ENCODE measurements at regions of chr4 and their contacts with region 1.

Region 1: DNA sequence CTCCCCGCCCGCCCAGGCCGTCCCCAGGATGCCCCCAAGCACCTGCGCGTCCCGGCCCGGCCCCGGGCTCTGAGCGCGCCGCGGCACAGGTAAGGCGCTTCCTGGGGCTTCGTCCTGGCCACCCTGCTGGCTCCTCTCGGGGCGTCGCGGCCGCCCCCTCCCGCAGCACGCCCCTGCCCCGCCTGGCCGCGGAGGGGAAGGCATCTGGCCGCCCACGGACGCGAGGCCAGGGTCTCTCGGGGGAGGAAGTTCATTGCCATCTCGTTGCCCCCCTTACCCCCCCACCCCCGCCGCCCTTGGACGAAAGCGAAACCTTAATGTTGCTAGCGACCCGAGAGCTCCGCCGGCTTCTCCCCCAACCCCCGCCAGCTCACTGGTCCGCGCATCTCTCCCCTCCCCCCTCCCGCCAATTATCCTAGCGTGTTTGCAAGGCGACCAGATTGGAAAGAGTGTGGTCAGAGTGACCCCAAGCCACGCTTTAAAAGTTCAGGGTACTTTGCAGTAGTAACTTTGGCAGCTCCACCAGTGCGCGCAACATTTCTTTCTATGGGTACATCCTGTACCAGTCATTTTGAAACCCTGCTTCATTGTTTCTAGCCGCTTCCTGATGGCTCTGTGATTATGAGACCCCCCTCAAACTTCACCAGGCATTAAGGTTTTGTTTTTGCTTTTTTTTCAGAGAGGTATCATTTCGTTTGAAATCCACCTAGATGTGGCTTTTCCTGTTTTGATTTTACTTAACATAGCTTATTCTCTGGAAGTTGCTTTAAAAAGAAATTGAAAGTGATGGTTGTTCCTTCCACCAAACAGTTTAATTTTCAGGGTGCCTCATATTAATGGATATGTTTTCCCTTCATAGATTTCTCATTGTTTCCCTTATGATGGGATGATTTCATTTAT is 626 bp downstream of the TBC1D1 start:
- DNase-seq: peak in 2 of 10 donors; percentile 9
- H3K4me3 ChIP-seq: peak overlapping the region; percentile 53 to 93 (median 79)
- H3K27ac ChIP-seq: peak overlapping the region in 55 of 59 donors; percentile 49 to 94 (median 86)
- H3K27me3 ChIP-seq: peaks cover 0 to 2% (median 0%) of the 10 kb centered on the region in 45 donors
- CTCF ChIP-seq: peak in 1 of 56 donors; percentile 16

Region 2: GRCh38 chr4:37826295-37827029 is 65.0 kb before region 1 on chr4 and contains the start of gene PGM2:
- intact Hi-C with region 1: loop called in 1 of 2 experiments (anchors 5 kb)
- DNase-seq: peak; percentile 48 to 90 (median 80)
- H3K4me3 ChIP-seq: peak within 1 kb of the TSS; percentile 50 to 98 (median 83)
- H3K27ac ChIP-seq: peak within 1 kb of the TSS in 54 of 59 donors; percentile 7 to 89 (median 72)
- H3K27me3 ChIP-seq: no peaks in the 10 kb centered on the region
- CTCF ChIP-seq: peak in 32 of 56 donors; percentile 2 to 53 (median 21)
- total RNA-seq, gene PGM2: 6.9 to 19.6 (median 11.9) TPM

Measured in dorsolateral prefrontal cortex (tissue), 120 donors.